ENCODE measurements at regions of chr5 and their contacts with region 1.

Region 1: GRCh38 chr5:95858661-95859326 is 36.3 kb upstream of the GLRX start:
- DNase-seq: peak; percentile 83
- ATAC-seq: peak; percentile 97
- H3K4me3 Mint-ChIP-seq: peak overlapping the region; percentile 66
- H3K27ac Mint-ChIP-seq: no peak overlapping the region
- H3K4me1 Mint-ChIP-seq: peaks cover 32% of the 10 kb centered on the region
- H3K27me3 Mint-ChIP-seq: peaks cover 14% of the 10 kb centered on the region
- CTCF ChIP-seq: peak; percentile 80

Region 2: GRCh38 chr5:95870105-95870672 is 11.4 kb after region 1 on chr5:
- CTCF ChIA-PET with region 1: interaction called, 15 read pairs
- POLR2A ChIA-PET with region 1: no interaction called
- intact Hi-C with region 1: loop called (anchors 1 kb)
- DNase-seq: no peak
- ATAC-seq: peak; percentile 33
- H3K4me3 Mint-ChIP-seq: peak overlapping the region; percentile 42
- H3K27ac Mint-ChIP-seq: peak overlapping the region; percentile 76
- H3K4me1 Mint-ChIP-seq: peaks cover 35% of the 10 kb centered on the region
- H3K27me3 Mint-ChIP-seq: no peaks in the 10 kb centered on the region
- CTCF ChIP-seq: no peak

Region 3: DNA sequence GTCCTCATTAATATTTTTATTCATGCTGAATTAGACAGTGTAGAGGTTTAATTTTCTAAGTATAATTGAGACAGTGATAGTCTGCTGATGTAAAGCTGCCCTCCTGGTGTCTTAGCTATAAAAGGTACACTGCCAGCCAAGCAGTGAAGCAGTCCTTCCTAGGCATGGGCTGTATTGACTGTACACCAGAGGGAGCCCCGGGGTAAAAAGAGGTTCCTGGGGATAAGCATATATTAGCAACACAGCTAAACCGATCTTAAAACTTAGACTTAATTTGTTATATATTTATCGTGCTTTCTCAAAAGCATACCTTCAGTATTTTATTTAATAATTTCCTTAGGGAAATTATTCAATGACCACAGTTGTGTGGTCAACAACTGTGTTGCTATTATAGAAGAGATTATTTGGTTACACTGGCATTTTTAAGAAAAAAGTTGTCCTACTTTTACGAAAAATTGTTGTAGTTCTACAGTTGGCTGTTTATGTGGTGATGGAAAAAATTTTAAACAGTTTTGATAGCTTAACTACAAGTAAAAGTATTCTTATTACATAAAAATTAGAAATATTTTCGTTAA is 34.1 kb after region 1 on chr5:
- CTCF ChIA-PET with region 1: interaction called, 3 read pairs
- POLR2A ChIA-PET with region 1: no interaction called
- intact Hi-C with region 1: loop called (anchors 2 kb)
- DNase-seq: no peak
- ATAC-seq: peak; percentile 54
- H3K4me3 Mint-ChIP-seq: no peak overlapping the region
- H3K27ac Mint-ChIP-seq: no peak overlapping the region
- H3K4me1 Mint-ChIP-seq: no peaks in the 10 kb centered on the region
- H3K27me3 Mint-ChIP-seq: no peaks in the 10 kb centered on the region
- CTCF ChIP-seq: no peak

Region 4: DNA sequence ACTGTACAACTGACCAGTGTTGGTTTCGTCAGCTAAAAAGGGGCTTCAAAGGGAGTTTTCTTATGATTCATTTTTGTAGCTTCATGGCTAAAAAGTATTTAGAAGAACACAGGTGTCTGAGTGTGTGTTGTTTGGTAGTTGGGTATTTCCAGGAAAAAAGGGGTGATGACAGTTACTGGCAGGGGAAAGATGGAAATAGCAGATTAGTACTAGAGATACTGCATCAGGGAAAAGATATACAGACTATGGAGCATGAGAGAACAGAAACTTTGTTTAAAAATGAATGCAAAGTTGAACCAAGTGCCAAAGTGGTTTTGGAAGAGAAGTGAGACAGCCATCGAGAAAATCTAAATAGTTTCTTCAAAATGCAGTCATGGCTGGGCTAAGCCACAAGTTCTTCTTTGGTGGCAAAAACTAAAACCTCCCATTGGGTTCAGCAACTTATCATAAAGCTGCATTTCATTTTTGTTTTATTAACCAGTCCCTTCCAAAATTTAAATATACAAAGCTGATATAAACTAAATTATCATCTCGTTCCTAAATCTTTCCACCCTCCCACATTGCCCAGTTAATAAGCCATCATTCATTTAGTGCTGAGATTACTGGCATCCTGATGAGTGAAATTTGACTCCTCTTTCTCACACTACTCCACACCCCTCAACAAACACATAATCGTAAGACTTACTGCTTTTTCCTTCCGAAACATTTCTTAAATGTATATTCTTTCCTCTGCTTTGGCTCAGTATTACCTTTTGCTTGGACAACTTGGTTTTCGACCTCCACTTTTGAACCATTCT is 69.3 kb after region 1 on chr5:
- CTCF ChIA-PET with region 1: interaction called, 3 read pairs
- POLR2A ChIA-PET with region 1: no interaction called
- intact Hi-C with region 1: loop called (anchors 2 kb)
- DNase-seq: no peak
- ATAC-seq: peak; percentile 70
- H3K4me3 Mint-ChIP-seq: peak overlapping the region; percentile 37
- H3K27ac Mint-ChIP-seq: peak overlapping the region; percentile 84
- H3K4me1 Mint-ChIP-seq: peaks cover 67% of the 10 kb centered on the region
- H3K27me3 Mint-ChIP-seq: no peaks in the 10 kb centered on the region
- CTCF ChIP-seq: no peak

Region 5: DNA sequence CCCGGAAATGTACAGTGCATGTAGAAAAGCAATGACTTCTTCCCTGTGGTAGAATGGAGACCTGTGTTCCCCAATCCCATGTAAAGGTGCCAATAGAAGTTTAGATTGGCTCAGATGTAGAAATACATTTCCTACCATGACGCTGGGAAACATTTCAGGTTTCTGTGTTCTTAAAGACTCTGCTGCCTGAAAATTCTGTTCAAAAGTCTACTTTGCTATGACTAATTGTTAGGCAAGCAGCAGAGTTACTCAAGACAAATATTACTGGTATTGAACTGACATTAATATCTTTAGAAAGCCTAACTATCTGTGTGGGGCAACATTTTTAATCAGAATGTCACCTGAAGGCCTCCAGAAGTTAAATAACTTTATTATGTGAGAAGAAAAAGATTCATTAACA is 178.3 kb after region 1 on chr5:
- CTCF ChIA-PET with region 1: no interaction called
- POLR2A ChIA-PET with region 1: no interaction called
- intact Hi-C with region 1: no loop called
- DNase-seq: no peak
- ATAC-seq: no peak
- H3K4me3 Mint-ChIP-seq: no peak overlapping the region
- H3K27ac Mint-ChIP-seq: no peak overlapping the region
- H3K4me1 Mint-ChIP-seq: no peaks in the 10 kb centered on the region
- H3K27me3 Mint-ChIP-seq: peaks cover 7% of the 10 kb centered on the region
- CTCF ChIP-seq: no peak

Region 6: DNA sequence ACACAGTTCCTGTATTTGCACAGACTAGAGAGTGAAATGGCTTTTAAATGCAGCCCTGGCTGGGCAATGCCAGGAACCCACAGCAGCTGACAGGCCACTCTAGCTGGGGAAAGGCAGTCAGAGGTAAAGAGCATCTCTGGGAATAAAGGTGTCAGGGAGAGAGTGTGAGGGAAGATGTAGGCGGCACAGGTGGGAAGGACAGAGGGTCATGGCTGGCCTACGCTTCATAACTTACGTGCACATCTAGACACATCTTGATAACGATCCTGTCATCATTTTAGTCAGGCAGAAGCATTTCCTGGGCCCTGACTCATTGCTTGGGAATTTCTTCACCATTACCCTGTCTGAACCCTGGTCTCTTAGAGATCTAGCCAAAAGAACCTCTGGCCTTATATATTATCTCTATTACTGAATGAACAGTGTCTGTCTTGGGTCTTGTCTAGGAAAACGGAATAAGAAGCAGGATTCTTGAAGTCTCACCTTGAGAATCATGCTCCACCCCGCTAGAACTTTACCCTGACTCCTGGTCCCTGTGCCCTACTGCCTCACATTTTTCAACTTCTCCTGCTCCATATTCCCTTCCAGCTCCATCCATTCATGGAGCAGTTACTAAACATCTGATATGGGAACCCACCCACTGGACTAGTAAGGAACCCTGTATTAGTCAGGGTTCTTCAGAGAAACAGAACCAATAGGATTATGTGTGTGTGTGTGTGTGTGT is 209.3 kb after region 1 on chr5:
- CTCF ChIA-PET with region 1: no interaction called
- POLR2A ChIA-PET with region 1: no interaction called
- intact Hi-C with region 1: no loop called
- DNase-seq: no peak
- ATAC-seq: no peak
- H3K4me3 Mint-ChIP-seq: no peak overlapping the region
- H3K27ac Mint-ChIP-seq: no peak overlapping the region
- H3K4me1 Mint-ChIP-seq: no peaks in the 10 kb centered on the region
- H3K27me3 Mint-ChIP-seq: no peaks in the 10 kb centered on the region
- CTCF ChIP-seq: no peak

Region 7: GRCh38 chr5:96336351-96336985 is 477.7 kb after region 1 on chr5:
- CTCF ChIA-PET with region 1: interaction called, 96 read pairs
- POLR2A ChIA-PET with region 1: interaction called, 3 read pairs
- intact Hi-C with region 1: loop called (anchors 1 kb)
- DNase-seq: no peak
- ATAC-seq: peak; percentile 91
- H3K4me3 Mint-ChIP-seq: no peak overlapping the region
- H3K27ac Mint-ChIP-seq: no peak overlapping the region
- H3K4me1 Mint-ChIP-seq: no peaks in the 10 kb centered on the region
- H3K27me3 Mint-ChIP-seq: peaks cover 6% of the 10 kb centered on the region
- CTCF ChIP-seq: peak; percentile 23

Region 8: GRCh38 chr5:96439477-96440184 is 580.8 kb after region 1 on chr5:
- CTCF ChIA-PET with region 1: no interaction called
- POLR2A ChIA-PET with region 1: no interaction called
- intact Hi-C with region 1: loop called (anchors 2 kb)
- DNase-seq: no peak
- ATAC-seq: peak; percentile 71
- H3K4me3 Mint-ChIP-seq: peak overlapping the region; percentile 56
- H3K27ac Mint-ChIP-seq: peak overlapping the region; percentile 77
- H3K4me1 Mint-ChIP-seq: peaks cover 17% of the 10 kb centered on the region
- H3K27me3 Mint-ChIP-seq: peaks cover 11% of the 10 kb centered on the region
- CTCF ChIP-seq: no peak

Region 9: GRCh38 chr5:96601811-96602244 is 743.0 kb after region 1 on chr5:
- CTCF ChIA-PET with region 1: interaction called, 5 read pairs
- POLR2A ChIA-PET with region 1: no interaction called
- intact Hi-C with region 1: loop called (anchors 1 kb)
- DNase-seq: no peak
- ATAC-seq: peak; percentile 75
- H3K4me3 Mint-ChIP-seq: no peak overlapping the region
- H3K27ac Mint-ChIP-seq: no peak overlapping the region
- H3K4me1 Mint-ChIP-seq: no peaks in the 10 kb centered on the region
- H3K27me3 Mint-ChIP-seq: no peaks in the 10 kb centered on the region
- CTCF ChIP-seq: peak; percentile 45

Measured in activated B cell treated with CpG ODN at 0.5 μM for 24 hours (primary cell).